A549 (cell line): ENCODE measurements at regions of chr15 and their contacts with region 1.

Region 1: DNA sequence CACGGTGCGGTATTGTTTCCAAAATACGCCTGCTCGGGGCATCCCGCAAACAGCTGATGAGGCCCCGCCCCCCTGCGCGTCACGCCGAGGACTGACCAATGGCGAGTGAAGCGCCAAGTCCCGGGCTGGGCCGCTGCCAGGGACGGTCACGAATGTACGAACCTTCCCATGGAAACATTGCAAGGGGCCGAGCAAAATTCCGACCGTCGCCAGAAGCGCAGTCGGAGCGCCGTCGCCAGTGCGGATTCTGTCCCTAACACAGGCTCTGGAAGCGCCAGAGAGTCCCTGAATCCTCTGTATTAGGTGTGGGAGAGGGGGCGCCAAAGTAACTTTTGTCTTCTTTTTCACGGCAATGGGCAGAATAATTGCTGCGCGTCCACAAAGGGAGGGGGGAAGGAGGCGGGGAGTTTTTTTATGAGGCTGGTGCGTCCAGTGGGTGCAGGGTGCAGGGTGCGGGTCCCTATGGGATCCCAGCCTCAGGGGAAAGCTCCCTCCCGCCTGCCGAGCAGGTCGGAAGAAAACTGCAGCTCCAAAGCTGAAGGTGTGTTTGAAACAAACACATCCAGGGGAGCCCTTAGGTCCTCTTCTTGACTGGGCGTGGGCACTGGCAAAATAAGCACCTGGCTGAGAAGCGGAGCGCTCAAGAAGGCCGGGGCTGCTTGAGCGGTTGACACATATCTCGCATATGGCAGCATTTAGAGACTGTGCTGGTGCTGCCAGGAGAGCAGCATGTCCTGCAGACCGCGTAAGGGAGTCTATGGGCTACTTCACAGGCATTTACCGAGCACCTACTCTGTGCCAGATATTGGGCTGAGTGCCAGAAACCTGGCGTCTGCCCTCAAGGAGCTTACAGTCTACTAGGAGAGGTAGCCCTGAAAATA is at the start of gene BMF:
- DNase-seq: peak; percentile 85 to 96
- ATAC-seq: peak; percentile 83 to 87
- H3K4me3 ChIP-seq: peak within 1 kb of the TSS; percentile 57
- H3K27ac ChIP-seq: peak within 1 kb of the TSS; percentile 59 to 82; a peak in 5 of 6 replicates
- H3K4me1 ChIP-seq: peaks cover 31% of the 10 kb centered on the region
- CTCF ChIP-seq: peak; percentile 40
- EP300 ChIP-seq: no peak
- POLR2A ChIP-seq: no peak
- RAD21 ChIP-seq: peak; percentile 17 to 36; a peak in 2 of 5 replicates
- polyA plus RNA-seq, gene BMF: 1.4 and 2.1 TPM in 2 replicates

Region 2: DNA sequence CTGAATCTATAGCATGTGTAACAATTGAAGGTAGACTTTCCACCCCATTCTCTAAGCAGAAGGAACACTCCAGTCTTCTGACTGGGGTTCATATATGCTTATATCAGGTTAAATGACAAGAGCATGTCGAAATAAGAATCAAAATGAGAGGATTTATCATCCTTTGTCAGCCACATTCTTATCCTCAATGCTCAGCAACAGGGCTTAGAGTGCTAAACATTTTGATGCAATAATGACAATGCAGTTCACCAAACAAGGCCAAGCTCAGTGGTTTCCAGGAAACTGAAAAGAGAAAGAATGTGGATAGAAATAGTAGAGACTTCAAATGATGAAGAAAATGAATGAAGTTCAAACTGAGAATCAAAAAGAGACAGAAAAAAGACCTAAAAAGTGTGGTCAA is 404.4 kb before region 1 on chr15:
- CTCF ChIA-PET with region 1: no interaction called
- POLR2A ChIA-PET with region 1: no interaction called
- DNase-seq: peak in 1 of 2 experiments; percentile 29
- ATAC-seq: no peak
- H3K4me3 ChIP-seq: no peak overlapping the region
- H3K27ac ChIP-seq: no peak overlapping the region
- H3K4me1 ChIP-seq: no peaks in the 10 kb centered on the region
- CTCF ChIP-seq: no peak
- EP300 ChIP-seq: no peak
- POLR2A ChIP-seq: no peak
- RAD21 ChIP-seq: no peak

Region 3: GRCh38 chr15:39747326-39747725 is 361.8 kb before region 1 on chr15:
- CTCF ChIA-PET with region 1: no interaction called
- POLR2A ChIA-PET with region 1: no interaction called
- DNase-seq: no peak
- ATAC-seq: no peak
- H3K4me3 ChIP-seq: no peak overlapping the region
- H3K27ac ChIP-seq: peak overlapping the region; percentile 47 to 68; a peak in 4 of 6 replicates
- H3K4me1 ChIP-seq: peaks cover 48% of the 10 kb centered on the region
- CTCF ChIP-seq: no peak
- EP300 ChIP-seq: no peak
- POLR2A ChIP-seq: no peak
- RAD21 ChIP-seq: no peak

Region 4: DNA sequence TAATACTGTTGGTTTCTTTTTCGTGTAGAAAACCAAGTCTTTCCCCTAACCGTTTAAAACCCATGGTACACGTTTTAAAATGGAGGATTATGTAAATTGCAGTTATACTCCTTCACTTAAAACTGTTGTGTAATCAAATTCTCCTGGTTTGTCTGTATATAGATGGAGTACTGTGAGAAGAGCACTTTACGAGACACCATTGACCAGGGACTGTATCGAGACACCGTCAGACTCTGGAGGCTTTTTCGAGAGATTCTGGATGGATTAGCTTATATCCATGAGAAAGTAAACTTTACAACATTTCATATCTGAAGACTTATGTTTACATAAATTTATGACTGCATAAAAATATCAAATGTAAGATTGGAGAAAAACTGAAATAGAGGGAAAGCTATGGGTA is 121.3 kb before region 1 on chr15:
- CTCF ChIA-PET with region 1: no interaction called
- POLR2A ChIA-PET with region 1: no interaction called
- DNase-seq: no peak
- ATAC-seq: no peak
- H3K4me3 ChIP-seq: no peak overlapping the region
- H3K27ac ChIP-seq: no peak overlapping the region
- H3K4me1 ChIP-seq: no peaks in the 10 kb centered on the region
- CTCF ChIP-seq: no peak
- EP300 ChIP-seq: no peak
- POLR2A ChIP-seq: no peak
- RAD21 ChIP-seq: no peak

Region 5: GRCh38 chr15:40054605-40055545 is 54.2 kb before region 1 on chr15:
- CTCF ChIA-PET with region 1: interaction called, 174 read pairs
- POLR2A ChIA-PET with region 1: no interaction called
- DNase-seq: no peak
- ATAC-seq: no peak
- H3K4me3 ChIP-seq: no peak overlapping the region
- H3K27ac ChIP-seq: 0 out of 6 replicates have a peak overlapping the region, but pooled peaks of 1 of the 2 experiments have one; percentile 17
- H3K4me1 ChIP-seq: peaks cover 7% of the 10 kb centered on the region; the same call in 1 of the 3 replicates
- CTCF ChIP-seq: no peak
- EP300 ChIP-seq: no peak
- POLR2A ChIP-seq: no peak
- RAD21 ChIP-seq: no peak

Region 6: DNA sequence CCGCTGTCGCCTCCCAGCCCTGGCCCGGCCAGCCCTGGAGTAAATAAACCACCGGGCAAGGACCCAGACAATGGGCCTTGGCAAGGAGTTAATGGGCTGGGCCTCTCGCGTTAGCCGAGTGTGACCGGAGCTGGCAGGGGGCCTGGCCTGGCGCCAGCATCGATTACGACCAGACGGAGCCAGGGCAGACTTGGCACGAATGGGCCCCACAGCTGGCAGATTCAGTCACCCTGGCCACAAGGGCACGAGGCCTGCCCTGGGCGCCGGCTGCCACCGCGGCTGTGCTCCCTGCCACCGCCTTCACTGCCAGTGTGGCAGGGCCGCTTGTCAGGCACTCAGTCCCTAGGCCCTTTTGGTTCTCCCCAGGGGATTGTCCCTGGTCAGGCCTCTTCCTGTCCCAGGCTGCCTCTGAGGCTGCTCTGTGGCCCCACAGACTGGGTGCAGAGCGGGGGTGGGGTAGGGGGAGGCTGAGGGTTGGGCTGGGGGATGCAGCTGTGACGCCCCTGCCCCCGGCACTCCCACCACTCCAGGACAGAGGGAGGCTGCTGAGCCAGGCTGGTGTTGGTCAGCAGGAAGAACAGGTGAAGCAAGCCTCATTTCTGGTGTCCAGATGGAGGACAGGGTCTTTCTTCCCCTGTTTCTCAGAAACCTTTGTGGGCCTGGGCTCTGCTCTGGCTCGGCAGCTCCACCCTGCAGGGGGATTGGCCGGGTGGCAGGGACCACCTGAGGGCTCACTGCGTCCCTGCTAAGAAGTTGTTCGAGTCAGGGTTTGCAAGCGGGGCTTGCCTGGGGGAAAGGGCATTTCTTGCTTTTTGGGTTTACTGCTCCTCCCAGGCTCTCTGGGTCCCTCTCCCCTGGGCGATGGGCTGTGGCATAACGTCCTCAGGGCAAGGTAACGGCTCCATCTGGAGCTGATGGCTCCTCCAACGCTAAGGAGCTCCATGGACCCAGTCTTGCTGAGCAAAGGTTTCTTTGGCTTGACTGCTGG is 39.6 kb before region 1 on chr15:
- CTCF ChIA-PET with region 1: interaction called, 20 read pairs
- POLR2A ChIA-PET with region 1: no interaction called
- DNase-seq: peak; percentile 76 to 84
- ATAC-seq: peak; percentile 82 to 83
- H3K4me3 ChIP-seq: no peak overlapping the region
- H3K27ac ChIP-seq: peak overlapping the region; percentile 84 to 86
- H3K4me1 ChIP-seq: peaks cover 48% of the 10 kb centered on the region
- CTCF ChIP-seq: no peak
- EP300 ChIP-seq: peak; percentile 30 to 32; a peak in 2 of 5 replicates
- POLR2A ChIP-seq: no peak
- RAD21 ChIP-seq: no peak; a peak in 1 of 5 replicates

Region 7: GRCh38 chr15:40092256-40092978 is 16.7 kb before region 1 on chr15:
- CTCF ChIA-PET with region 1: interaction called, 28 read pairs
- POLR2A ChIA-PET with region 1: no interaction called
- DNase-seq: no peak
- ATAC-seq: no peak
- H3K4me3 ChIP-seq: no peak overlapping the region
- H3K27ac ChIP-seq: peak overlapping the region in 1 of 2 experiments; percentile 66; a peak in 3 of 6 replicates
- H3K4me1 ChIP-seq: peaks cover 41% of the 10 kb centered on the region
- CTCF ChIP-seq: no peak
- EP300 ChIP-seq: no peak
- POLR2A ChIP-seq: no peak
- RAD21 ChIP-seq: no peak

Region 8: GRCh38 chr15:40121911-40122638 is 13.0 kb after region 1 on chr15:
- CTCF ChIA-PET with region 1: interaction called, 11 read pairs
- POLR2A ChIA-PET with region 1: no interaction called
- DNase-seq: no peak
- ATAC-seq: no peak
- H3K4me3 ChIP-seq: no peak overlapping the region
- H3K27ac ChIP-seq: no peak overlapping the region
- H3K4me1 ChIP-seq: no peaks in the 10 kb centered on the region
- CTCF ChIP-seq: no peak
- EP300 ChIP-seq: no peak
- POLR2A ChIP-seq: no peak
- RAD21 ChIP-seq: no peak

Region 9: DNA sequence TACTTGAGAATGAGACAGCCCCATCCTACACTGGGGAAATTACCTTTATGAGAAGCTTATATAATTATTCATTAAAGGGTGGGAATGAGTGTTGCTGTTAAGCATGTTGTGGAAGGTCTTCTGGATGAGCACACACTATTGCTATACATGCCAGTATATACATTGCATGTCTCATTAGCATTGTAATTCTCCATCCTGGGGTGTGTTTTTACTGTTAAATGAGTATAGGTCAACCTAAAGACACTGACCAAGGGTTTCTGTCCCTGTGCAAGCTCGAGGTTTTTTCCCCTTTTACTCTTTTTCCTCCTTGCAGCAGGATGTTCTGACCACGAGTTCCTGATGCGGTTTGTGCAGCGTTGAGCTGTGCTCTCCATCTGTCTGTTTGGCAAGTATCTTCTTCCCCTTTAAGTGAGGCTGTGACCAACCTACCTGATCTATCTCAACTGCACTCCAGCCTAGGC is 289.3 kb after region 1 on chr15:
- CTCF ChIA-PET with region 1: no interaction called
- POLR2A ChIA-PET with region 1: no interaction called
- DNase-seq: no peak
- ATAC-seq: no peak
- H3K4me3 ChIP-seq: no peak overlapping the region
- H3K27ac ChIP-seq: no peak overlapping the region
- H3K4me1 ChIP-seq: no peaks in the 10 kb centered on the region
- CTCF ChIP-seq: no peak
- EP300 ChIP-seq: no peak
- POLR2A ChIP-seq: no peak
- RAD21 ChIP-seq: no peak